Mammary epithelial cell (primary cell): ENCODE measurements at regions of chr13 and their contacts with region 1.

Region 1: GRCh38 chr13:98484289-98485219 is 92.4 kb downstream of the STK24 start:
- DNase-seq: peak; percentile 99
- H3K4me3 ChIP-seq: peak overlapping the region in 2 of 3 experiments; percentile 11 to 17
- H3K27ac ChIP-seq: peak overlapping the region; percentile 94
- H3K4me1 ChIP-seq: peaks cover 38% of the 10 kb centered on the region
- H3K27me3 ChIP-seq: no peaks in the 10 kb centered on the region
- CTCF ChIP-seq: peak in 1 of 2 donors; percentile 32

Region 2: DNA sequence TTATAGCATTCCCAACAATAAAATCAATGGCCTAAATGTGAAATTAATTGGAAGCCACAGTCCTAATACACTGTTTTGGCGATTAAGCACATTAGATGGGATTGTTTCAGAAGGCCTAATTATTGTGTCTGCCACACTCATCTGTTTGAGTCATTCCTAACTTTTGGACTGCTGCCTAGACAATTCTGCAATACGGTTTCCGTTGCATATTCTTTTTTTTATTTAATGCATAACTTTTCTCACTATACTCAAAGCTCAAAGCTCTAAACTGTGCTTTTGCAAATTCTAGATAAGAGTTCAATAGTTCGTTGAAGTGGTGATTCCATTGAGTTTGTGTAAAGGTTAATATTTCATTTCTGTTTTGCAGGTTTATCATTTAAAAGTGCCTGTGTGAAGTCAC is 1209.3 kb before region 1 on chr13:
- CTCF ChIA-PET with region 1: no interaction called
- dilution Hi-C with region 1: no loop called
- in situ Hi-C with region 1: loop called in 1 of 2 experiments (anchors 25 kb)
- intact Hi-C with region 1: no loop called
- DNase-seq: peak; percentile 79
- H3K4me3 ChIP-seq: peak overlapping the region in 1 of 3 experiments; percentile 13
- H3K27ac ChIP-seq: peak overlapping the region; percentile 97
- H3K4me1 ChIP-seq: peaks cover 74% of the 10 kb centered on the region
- H3K27me3 ChIP-seq: no peaks in the 10 kb centered on the region
- CTCF ChIP-seq: no peak

Region 3: GRCh38 chr13:98535501-98536354 is 51.2 kb after region 1 on chr13:
- CTCF ChIA-PET with region 1: interaction called, 6 read pairs
- dilution Hi-C with region 1: loop called (anchors 5 kb)
- in situ Hi-C with region 1: no loop called
- intact Hi-C with region 1: no loop called
- DNase-seq: peak; percentile 68
- H3K4me3 ChIP-seq: no peak overlapping the region
- H3K27ac ChIP-seq: peak overlapping the region; percentile 28
- H3K4me1 ChIP-seq: peaks cover 25% of the 10 kb centered on the region
- H3K27me3 ChIP-seq: no peaks in the 10 kb centered on the region
- CTCF ChIP-seq: no peak

Region 4: DNA sequence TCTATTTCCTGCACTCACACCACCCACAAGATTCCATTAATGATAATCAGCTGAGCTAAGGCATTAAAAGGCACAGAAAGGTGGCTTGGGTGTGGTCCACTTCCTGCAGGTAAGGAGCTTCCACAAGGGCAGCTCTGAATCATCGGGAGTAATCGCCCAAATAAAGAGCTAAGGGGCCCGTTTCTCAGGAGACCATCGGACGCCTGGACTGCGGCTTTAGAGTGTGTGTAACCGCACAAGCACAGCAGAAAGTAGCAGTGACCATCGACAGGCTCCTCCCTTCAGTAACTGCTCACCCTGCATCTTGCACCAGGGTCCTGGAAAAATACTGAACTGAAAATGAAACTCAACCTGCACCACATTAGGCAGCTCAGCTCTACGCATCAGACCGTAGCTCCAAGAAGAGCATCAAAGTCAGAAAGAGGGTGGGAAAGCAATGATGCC is 86.4 kb after region 1 on chr13:
- CTCF ChIA-PET with region 1: no interaction called
- dilution Hi-C with region 1: no loop called
- in situ Hi-C with region 1: no loop called
- intact Hi-C with region 1: loop called (anchors 5 kb)
- DNase-seq: peak; percentile 81
- H3K4me3 ChIP-seq: peak overlapping the region; percentile 3 to 38 (median 32)
- H3K27ac ChIP-seq: peak overlapping the region; percentile 60
- H3K4me1 ChIP-seq: peaks cover 47% of the 10 kb centered on the region
- H3K27me3 ChIP-seq: no peaks in the 10 kb centered on the region
- CTCF ChIP-seq: no peak

Region 5: DNA sequence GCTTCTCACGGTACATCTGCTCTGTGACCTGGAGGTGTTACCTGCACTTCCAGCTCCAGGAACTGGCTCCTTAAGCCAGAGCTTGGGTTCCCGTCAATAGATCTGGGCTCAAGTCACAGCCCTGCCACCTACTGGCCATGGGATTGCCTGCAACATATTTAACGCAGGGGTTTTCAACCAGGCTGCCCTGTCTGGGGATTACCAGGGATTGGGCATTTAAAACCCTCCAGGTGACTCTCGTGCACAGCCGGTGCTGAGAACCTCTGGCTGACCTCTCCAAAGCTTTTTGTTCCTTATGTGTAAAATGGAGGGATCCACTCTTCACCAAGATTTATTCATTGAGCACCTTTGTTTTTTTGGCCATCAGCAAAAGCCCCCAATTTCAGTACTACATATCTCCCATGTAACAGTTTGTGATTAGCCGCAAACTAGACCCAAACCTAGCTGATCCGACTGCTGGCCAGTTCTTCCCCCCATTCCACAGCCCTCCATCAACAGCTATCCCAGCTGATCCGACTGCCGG is 169.0 kb after region 1 on chr13:
- CTCF ChIA-PET with region 1: no interaction called
- dilution Hi-C with region 1: no loop called
- in situ Hi-C with region 1: loop called in 1 of 2 experiments (anchors 10 kb)
- intact Hi-C with region 1: loop called (anchors 1 kb)
- DNase-seq: peak; percentile 76
- H3K4me3 ChIP-seq: no peak overlapping the region
- H3K27ac ChIP-seq: no peak overlapping the region
- H3K4me1 ChIP-seq: no peaks in the 10 kb centered on the region
- H3K27me3 ChIP-seq: no peaks in the 10 kb centered on the region
- CTCF ChIP-seq: peak; percentile 81 to 95